ENCODE measurements at regions of chr12 and their contacts with region 1.

Region 1: DNA sequence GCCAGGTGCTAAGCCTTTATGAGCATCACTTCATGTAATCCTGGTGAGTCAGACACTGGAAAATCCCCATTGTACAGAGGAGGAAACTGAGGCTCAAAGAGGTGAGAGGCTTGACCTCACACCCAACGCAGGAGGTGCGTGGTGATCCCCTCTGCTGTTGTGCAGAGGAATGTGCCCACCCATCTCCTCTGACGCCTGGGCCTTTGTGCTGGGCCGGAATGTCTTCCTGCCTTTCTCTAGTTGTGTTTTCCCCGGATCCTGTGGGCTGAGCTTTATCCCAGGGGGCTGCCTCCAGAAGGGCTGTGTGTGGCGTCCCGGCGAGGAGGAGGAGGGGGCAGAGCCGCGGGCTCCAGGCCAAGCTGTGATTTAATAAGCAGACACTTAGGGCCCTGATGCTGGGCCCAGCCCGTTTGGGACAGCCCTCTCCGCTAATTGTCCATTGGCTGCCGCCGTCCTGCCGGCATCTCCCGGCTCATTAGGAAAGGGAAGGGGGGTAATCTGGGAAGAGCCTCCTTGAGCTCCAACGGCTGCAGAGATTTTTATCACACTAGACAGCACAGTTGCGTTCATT is 653.6 kb downstream of the MED13L start:
- DNase-seq: peak; percentile 57 to 84 (median 63)
- ATAC-seq: peak; percentile 60 to 83
- H3K4me3 ChIP-seq: no peak overlapping the region
- H3K27ac ChIP-seq: peak overlapping the region; percentile 31
- H3K4me1 ChIP-seq: no peaks in the 10 kb centered on the region
- H3K27me3 ChIP-seq: no peaks in the 10 kb centered on the region

Region 2: GRCh38 chr12:115437061-115437567 is 186.7 kb before region 1 on chr12:
- intact Hi-C with region 1: loop called in 1 of 4 experiments (anchors 10 kb)
- DNase-seq: peak in 1 of 3 donors; percentile 24
- ATAC-seq: peak; percentile 49 to 50
- H3K4me3 ChIP-seq: no peak overlapping the region
- H3K27ac ChIP-seq: peak overlapping the region; percentile 63
- H3K4me1 ChIP-seq: peaks cover 3% of the 10 kb centered on the region
- H3K27me3 ChIP-seq: no peaks in the 10 kb centered on the region

Measured in right cardiac atrium (tissue), 5 donors.